H1 (cell line): ENCODE measurements at regions of chr9 and their contacts with region 1.

Region 1: DNA sequence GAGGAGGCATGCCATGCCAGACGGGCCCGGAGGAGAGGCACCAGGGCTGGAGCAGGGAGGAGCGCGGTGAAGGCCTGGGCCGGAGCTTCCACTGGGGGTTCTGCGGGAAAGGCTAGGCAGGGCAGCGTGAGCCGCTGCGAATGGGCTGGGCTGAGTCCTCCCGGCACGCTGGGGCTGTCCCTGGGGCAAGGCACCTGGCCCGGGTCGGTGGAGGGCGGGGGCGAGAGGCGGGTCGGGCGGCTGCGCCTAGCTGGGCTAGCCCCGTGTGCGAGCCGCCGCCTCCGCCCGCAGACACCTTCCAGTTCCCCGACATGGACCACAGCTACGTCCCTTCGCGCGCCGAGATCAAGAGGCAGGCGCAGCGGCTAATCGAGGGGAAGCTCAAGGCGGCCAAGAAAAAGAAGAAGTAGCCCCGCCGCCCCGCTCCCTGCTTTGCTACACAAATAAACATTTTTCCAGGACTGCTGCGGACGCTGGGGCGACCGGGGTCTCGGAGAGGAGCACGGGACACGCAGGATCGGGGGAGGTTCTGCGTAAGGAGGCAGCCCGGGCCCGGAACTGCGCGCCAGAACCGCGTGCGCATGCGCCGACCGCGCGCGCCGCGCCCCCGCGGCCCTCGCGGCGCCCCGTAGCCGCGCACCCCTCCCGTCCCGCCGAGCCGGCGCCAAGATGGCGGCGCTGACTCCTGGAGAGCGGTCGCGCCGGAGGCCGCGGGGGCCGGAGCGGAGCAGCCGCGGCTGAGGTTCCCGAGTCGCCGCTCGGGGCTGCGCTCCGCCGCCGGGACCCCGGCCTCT is at the start of gene RABL6:
- DNase-seq: peak in 1 of 2 experiments; percentile 86
- H3K4me3 ChIP-seq: peak within 1 kb of the TSS; percentile 88 to 100 (median 94)
- H3K27ac ChIP-seq: peak within 1 kb of the TSS; percentile 86; the same call in 1 of the 2 replicates
- H3K4me1 ChIP-seq: peaks cover 0 to 10% (median 7%) of the 10 kb centered on the region in 4 experiments; a peak in 6 of 7 replicates
- H3K27me3 ChIP-seq: peaks cover 0 to 16% (median 6%) of the 10 kb centered on the region in 4 experiments; a peak in 2 of 7 replicates
- CTCF ChIP-seq: no peak
- EP300 ChIP-seq: no peak
- POLR2A ChIP-seq: peak in 1 of 2 experiments; percentile 74; a peak in 2 of 3 replicates
- RAD21 ChIP-seq: no peak
- total RNA-seq, gene RABL6: 129 and 130 TPM in 2 replicates

Region 2: DNA sequence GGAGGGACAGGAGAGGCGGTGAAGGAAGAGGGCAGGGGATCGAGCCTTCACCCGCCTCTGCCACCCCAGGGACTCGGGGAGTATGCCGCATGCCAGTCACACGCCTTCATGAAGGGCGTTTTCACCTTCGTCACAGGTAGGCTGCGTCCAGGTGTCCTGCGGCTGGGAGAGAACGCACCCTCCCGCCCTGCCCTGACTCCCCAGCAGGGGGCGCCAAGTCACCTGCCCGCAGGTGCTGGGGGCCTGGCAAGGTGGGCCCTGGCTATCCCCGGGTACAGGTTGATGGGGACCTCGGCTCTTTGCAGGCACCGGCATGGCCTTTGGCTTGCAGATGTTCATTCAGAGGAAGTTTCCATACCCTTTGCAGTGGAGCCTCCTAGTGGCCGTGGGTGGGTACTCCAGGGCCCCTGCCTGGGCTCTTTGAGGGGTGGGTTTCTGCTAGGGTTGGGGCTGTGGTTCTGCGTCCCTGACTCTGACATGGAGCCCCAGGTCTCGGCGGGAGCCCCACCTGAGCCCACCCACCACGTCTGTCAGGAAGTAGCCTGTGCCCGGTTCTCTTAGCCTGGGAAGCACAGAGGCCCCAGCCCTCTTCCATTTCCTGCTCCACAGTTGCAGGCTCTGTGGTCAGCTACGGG is 15.7 kb before region 1 on chr9:
- CTCF ChIA-PET with region 1: interaction called, 16 read pairs
- POLR2A ChIA-PET with region 1: interaction called, 5 read pairs
- DNase-seq: peak in 1 of 2 experiments; percentile 91
- H3K4me3 ChIP-seq: peak overlapping the region; percentile 61 to 84 (median 81)
- H3K27ac ChIP-seq: peak overlapping the region; percentile 78
- H3K4me1 ChIP-seq: peaks cover 0 to 11% (median 5%) of the 10 kb centered on the region in 4 experiments; a peak in 4 of 7 replicates
- H3K27me3 ChIP-seq: no peaks in the 10 kb centered on the region
- CTCF ChIP-seq: peak in 2 of 3 experiments; percentile 85 to 91; a peak in 3 of 4 replicates
- EP300 ChIP-seq: no peak; a peak in 1 of 3 replicates
- POLR2A ChIP-seq: no peak
- RAD21 ChIP-seq: peak; percentile 49 to 63

Region 3: GRCh38 chr9:136820971-136821825 is 13.7 kb after region 1 on chr9:
- CTCF ChIA-PET with region 1: interaction called, 9 read pairs
- POLR2A ChIA-PET with region 1: interaction called, 96 read pairs
- DNase-seq: no peak
- H3K4me3 ChIP-seq: peak overlapping the region; percentile 23 to 62 (median 40)
- H3K27ac ChIP-seq: no peak overlapping the region
- H3K4me1 ChIP-seq: peaks cover 0 to 11% (median 5%) of the 10 kb centered on the region in 4 experiments; a peak in 4 of 7 replicates
- H3K27me3 ChIP-seq: 0 out of 7 replicates have a peak, but pooled peaks cover 0 to 2% (median 0%) of the 10 kb centered on the region in 4 experiments
- CTCF ChIP-seq: no peak
- EP300 ChIP-seq: no peak
- POLR2A ChIP-seq: no peak
- RAD21 ChIP-seq: no peak

Region 4: DNA sequence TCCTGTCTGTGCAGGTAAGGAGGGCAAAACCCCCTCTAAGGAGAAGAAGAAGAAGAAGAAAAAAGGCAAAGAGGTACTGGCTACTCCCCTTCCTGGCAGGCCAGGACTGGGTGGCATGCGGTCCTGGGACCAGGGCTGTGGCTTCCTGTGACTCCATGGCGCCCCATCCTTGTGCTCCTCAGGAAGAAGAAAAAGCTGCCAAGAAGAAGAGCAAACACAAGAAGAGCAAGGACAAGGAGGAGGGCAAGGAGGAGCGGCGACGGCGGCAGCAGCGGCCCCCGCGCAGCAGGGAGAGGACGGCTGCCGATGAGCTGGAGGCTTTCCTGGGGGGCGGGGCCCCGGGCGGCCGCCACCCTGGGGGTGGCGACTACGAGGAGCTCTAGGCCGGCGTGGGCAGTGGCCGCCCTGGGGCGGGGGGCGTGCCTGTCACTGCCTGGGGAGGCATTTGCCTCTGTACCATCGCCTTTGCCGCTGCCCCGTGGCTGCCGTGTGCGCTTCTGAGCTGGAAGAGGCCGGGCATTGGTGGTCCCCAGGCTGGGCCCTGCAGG is 32.7 kb after region 1 on chr9:
- CTCF ChIA-PET with region 1: interaction called, 131 read pairs
- POLR2A ChIA-PET with region 1: interaction called, 22 read pairs
- DNase-seq: no peak
- H3K4me3 ChIP-seq: no peak overlapping the region
- H3K27ac ChIP-seq: no peak overlapping the region
- H3K4me1 ChIP-seq: peaks cover 5 to 24% (median 16%) of the 10 kb centered on the region in 4 experiments
- H3K27me3 ChIP-seq: no peaks in the 10 kb centered on the region
- CTCF ChIP-seq: no peak
- EP300 ChIP-seq: no peak
- POLR2A ChIP-seq: no peak; a peak in 1 of 3 replicates
- RAD21 ChIP-seq: no peak

Region 5: DNA sequence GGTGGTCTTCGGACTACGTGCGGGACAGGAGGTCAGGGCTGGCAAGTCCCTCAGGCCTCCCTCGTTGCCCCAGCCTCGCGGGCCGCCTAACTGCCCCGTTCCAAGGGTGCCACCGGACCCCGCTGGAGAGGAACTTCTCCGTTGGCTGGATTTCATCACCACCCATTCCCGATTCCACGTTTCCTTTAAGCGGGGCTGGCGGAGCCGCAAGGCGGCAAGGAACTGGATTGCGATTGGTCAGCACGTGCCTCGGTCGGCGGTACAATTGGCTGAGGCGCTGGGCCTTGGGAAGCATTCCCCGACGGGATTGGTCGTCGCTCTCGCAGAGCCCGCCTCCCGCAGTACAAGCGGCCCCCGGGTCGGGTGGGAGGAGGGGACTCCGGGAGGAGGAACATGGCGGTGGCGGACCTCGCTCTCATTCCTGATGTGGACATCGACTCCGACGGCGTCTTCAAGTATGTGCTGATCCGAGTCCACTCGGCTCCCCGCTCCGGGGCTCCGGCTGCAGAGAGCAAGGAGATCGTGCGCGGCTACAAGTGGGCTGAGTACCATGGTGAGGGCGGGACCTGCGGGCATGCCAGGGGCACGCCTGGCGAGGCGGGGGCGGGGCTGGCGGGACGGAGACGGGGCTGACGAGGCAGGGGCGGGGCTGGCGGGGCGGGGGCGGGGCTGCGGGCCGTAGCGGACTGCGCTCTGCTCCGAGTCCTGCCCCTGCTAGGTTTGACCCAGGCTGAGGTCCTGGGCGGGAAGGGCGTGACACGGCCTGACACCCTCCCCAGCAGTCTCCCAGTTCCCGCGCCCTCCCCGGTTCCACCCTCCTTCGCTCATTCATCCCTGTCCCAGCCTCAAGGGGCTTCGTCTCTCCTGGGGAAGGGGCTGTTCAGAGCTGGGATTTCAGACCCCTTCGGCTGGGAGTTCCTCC is 41.8 kb after region 1 on chr9 and contains the start of gene PHPT1:
- CTCF ChIA-PET with region 1: interaction called, 131 read pairs
- POLR2A ChIA-PET with region 1: interaction called, 15 read pairs
- DNase-seq: peak; percentile 98
- H3K4me3 ChIP-seq: peak within 1 kb of the TSS; percentile 81 to 89 (median 84)
- H3K27ac ChIP-seq: peak within 1 kb of the TSS; percentile 90
- H3K4me1 ChIP-seq: peaks cover 0 to 18% (median 8%) of the 10 kb centered on the region in 4 experiments; a peak in 5 of 7 replicates
- H3K27me3 ChIP-seq: peaks cover 2 to 12% (median 7%) of the 10 kb centered on the region in 4 experiments; a peak in 6 of 7 replicates
- CTCF ChIP-seq: no peak
- EP300 ChIP-seq: no peak
- POLR2A ChIP-seq: peak in 1 of 2 experiments; percentile 99; a peak in 2 of 3 replicates
- RAD21 ChIP-seq: no peak
- total RNA-seq, gene PHPT1: 109 and 111 TPM in 2 replicates